B cell (primary cell): ENCODE measurements at regions of chr2 and their contacts with region 1.

Region 1: GRCh38 chr2:36785179-36785795 is 88.8 kb downstream of the VIT start:
- DNase-seq: peak; percentile 73
- ATAC-seq: peak; percentile 75
- H3K4me3 ChIP-seq: no peak overlapping the region
- H3K4me3 Mint-ChIP-seq: no peak overlapping the region
- H3K27ac ChIP-seq: no peak overlapping the region
- H3K27ac Mint-ChIP-seq: no peak overlapping the region
- H3K4me1 ChIP-seq: peaks cover 9% of the 10 kb centered on the region in 2 donors
- H3K4me1 Mint-ChIP-seq: peaks cover 13% of the 10 kb centered on the region
- H3K27me3 ChIP-seq: peaks cover 0 to 2% (median 0%) of the 10 kb centered on the region in 4 experiments
- H3K27me3 Mint-ChIP-seq: peaks cover 18% of the 10 kb centered on the region
- CTCF ChIP-seq: peak; percentile 99

Region 2: DNA sequence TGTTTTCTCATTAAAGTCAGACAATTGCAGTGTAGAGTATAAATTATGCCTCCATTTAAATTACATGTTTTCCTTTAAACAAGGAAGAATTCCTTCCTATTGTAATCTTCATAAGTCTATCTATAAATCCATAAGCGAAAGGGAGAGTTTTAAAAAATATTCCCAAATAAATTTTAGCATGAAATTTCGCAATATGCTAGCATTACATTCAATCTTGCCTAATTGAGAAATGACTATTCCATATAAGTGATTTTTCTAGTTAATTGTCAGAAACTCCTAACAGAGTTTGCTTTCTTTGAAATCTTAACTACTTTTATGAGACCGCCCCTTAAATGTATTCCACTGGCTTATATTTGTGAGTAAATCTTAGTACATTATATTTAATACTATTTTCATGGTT is 562.8 kb before region 1 on chr2:
- CTCF ChIA-PET with region 1: no interaction called
- POLR2A ChIA-PET with region 1: no interaction called
- intact Hi-C with region 1: no loop called
- DNase-seq: no peak
- ATAC-seq: no peak
- H3K4me3 ChIP-seq: no peak overlapping the region
- H3K4me3 Mint-ChIP-seq: no peak overlapping the region
- H3K27ac ChIP-seq: no peak overlapping the region
- H3K27ac Mint-ChIP-seq: no peak overlapping the region
- H3K4me1 ChIP-seq: no peaks in the 10 kb centered on the region
- H3K4me1 Mint-ChIP-seq: no peaks in the 10 kb centered on the region
- H3K27me3 ChIP-seq: no peaks in the 10 kb centered on the region
- H3K27me3 Mint-ChIP-seq: no peaks in the 10 kb centered on the region
- CTCF ChIP-seq: no peak

Region 3: DNA sequence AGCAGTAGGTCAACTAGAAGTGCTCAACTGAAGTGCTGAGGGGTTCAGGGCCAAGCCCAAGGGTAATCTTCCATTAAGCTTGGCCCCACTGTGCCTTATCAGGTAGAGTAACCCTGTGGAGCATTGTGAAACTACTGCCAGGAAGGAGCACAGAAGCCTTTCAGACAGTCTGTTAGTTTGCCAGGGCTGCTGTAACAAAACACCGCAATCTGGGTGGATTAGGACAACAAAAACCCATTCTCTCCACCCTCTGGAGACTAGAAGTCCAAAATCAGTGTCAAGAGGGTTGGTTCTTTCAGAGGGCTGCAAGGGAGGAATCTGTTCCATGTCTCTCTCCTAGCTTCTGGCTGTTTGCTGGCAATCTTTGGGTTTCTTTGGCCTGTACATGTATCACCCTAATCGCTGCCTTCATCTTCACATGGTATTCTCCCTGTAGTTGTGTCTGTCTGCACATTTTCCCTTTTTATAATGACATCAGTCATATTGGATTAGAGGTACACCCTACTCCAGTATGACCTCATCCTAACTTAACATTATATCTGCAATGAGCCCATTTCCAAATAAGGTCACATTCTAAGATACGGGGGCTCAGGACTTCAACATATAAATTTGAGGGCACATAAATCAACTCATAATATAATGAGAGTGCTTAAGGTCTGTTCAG is 67.6 kb before region 1 on chr2:
- CTCF ChIA-PET with region 1: no interaction called
- POLR2A ChIA-PET with region 1: no interaction called
- intact Hi-C with region 1: no loop called
- DNase-seq: no peak
- ATAC-seq: no peak
- H3K4me3 ChIP-seq: no peak overlapping the region
- H3K4me3 Mint-ChIP-seq: no peak overlapping the region
- H3K27ac ChIP-seq: no peak overlapping the region
- H3K27ac Mint-ChIP-seq: no peak overlapping the region
- H3K4me1 ChIP-seq: no peaks in the 10 kb centered on the region
- H3K4me1 Mint-ChIP-seq: no peaks in the 10 kb centered on the region
- H3K27me3 ChIP-seq: peaks cover 0 to 3% (median 0%) of the 10 kb centered on the region in 4 experiments
- H3K27me3 Mint-ChIP-seq: no peaks in the 10 kb centered on the region
- CTCF ChIP-seq: no peak

Region 4: DNA sequence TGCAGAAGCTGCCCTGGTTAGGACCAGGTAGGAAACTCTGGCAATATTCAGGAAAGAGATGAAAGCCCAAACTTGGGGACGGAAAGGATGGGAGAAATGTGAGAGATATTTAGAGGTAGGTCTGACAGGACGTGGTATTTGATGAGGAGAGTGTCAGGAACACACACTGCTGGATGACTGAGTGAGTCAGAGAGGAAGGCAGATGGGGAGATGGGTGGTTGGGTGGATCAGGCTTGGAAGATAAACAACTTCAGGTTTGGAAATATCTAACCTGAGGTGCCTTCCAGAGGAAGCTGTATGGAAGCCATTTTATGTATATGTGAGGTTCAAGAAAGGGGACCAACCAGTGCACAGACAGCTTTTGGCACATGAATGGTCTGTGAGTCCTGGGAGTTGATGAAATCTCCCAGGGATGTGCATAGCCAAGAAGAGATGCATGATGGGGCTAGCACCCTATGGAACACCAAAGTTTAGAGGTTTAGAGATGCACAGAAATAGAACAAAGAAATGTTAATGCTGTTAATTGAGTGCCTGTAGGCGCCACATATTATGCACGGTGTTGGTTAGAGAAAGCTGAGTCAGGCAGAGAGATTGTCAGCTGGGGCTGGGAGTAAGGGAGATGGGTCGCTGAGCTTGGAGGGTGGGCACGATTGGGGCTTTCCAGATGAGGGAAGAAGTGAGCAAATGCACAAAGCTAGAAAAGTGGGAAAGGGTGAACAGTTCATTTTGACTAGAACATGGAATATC is 12.2 kb after region 1 on chr2:
- CTCF ChIA-PET with region 1: interaction called, 29 read pairs
- POLR2A ChIA-PET with region 1: no interaction called
- intact Hi-C with region 1: no loop called
- DNase-seq: no peak
- ATAC-seq: no peak
- H3K4me3 ChIP-seq: no peak overlapping the region
- H3K4me3 Mint-ChIP-seq: no peak overlapping the region
- H3K27ac ChIP-seq: no peak overlapping the region
- H3K27ac Mint-ChIP-seq: no peak overlapping the region
- H3K4me1 ChIP-seq: no peaks in the 10 kb centered on the region
- H3K4me1 Mint-ChIP-seq: no peaks in the 10 kb centered on the region
- H3K27me3 ChIP-seq: peaks cover 0 to 5% (median 1%) of the 10 kb centered on the region in 4 experiments
- H3K27me3 Mint-ChIP-seq: peaks cover 32% of the 10 kb centered on the region
- CTCF ChIP-seq: no peak

Region 5: DNA sequence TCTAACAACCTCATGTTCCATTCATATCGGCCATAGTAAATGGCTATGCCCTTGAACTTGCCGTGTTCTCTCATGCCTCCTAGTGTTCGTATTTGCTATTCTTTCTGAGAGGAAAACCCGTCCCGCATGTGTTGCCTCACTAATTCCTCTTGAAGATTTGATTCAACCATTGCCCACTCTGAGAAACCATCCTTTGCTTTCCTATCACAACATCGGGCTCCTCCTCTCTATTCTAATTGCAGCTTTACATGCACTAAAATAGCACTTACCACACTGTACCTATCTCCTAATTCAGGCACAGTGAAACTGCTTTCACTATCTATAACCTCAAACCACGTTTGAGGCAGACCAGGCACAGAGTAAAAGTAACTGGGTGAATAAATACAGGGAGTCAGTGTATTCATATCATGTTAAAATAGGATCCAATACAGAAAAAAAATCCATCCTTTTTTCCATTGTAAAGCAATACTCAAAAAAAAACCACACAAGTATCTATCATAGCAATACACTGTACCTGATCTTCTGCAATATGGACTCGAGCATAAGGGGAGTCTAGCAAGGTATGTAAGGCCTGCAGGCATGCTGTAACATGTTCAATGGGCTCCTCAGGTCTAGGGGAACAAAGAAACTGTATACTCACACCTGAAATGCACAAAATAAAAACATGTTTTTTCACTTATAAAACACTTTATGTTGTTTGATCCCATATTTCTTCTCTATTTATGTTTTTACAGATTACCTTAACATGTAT is 220.0 kb after region 1 on chr2:
- CTCF ChIA-PET with region 1: interaction called, 4 read pairs
- POLR2A ChIA-PET with region 1: no interaction called
- intact Hi-C with region 1: loop called (anchors 2 kb)
- DNase-seq: peak; percentile 46
- ATAC-seq: peak; percentile 65
- H3K4me3 ChIP-seq: peak overlapping the region in 2 of 5 experiments; percentile 6 to 18
- H3K4me3 Mint-ChIP-seq: peak overlapping the region; percentile 74
- H3K27ac ChIP-seq: peak overlapping the region in 1 of 2 donors; percentile 57
- H3K27ac Mint-ChIP-seq: peak overlapping the region; percentile 86
- H3K4me1 ChIP-seq: peaks cover 13 to 17% of the 10 kb centered on the region in 2 donors
- H3K4me1 Mint-ChIP-seq: peaks cover 14% of the 10 kb centered on the region
- H3K27me3 ChIP-seq: no peaks in the 10 kb centered on the region
- H3K27me3 Mint-ChIP-seq: no peaks in the 10 kb centered on the region
- CTCF ChIP-seq: peak; percentile 49

Region 6: DNA sequence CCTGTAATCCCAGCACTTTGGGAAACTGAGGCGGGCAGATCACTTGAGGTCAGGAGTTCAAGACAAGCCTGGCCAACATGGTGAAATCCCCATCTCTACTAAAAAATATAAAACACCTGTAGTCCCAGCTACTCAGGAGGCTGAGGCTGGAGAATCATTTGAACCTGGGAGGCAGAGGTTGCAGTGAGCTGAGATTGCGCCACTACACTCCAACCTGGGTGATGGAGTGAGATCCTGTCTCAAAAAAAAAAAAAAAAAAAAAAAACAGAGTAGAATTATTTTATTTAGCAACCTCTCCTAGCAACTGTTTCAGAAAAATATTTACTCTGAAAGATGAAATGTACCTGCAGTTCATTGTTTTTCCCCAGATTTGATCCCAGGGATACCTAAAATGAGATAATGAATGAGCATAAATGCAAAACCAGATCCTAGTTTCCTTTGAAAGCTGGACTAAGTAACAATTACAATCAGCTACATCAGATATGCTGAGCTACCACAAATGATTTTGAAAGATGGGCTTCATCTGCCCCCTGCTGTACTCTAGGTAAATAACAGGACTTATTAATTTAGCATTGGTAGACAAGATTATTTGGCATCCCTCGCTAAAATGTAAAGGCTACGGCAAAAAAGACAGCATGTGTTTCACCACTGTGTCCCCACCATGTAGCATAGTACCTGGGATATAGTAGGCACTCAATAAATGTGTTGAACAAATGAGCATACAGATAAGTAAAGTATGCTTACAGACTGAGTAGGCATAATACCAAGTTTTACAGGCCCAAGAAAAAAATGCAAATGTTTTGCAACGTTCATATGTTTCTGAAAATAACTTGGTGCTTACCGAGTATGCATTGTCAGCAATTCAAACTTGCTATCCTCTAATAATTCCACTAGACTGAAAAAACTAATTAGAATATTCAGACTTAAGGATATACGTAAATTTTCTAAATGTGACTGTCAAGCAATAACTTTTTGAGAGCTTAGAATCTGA is 1489.3 kb after region 1 on chr2:
- CTCF ChIA-PET with region 1: no interaction called
- POLR2A ChIA-PET with region 1: no interaction called
- intact Hi-C with region 1: loop called (anchors 5 kb)
- DNase-seq: peak; percentile 60
- ATAC-seq: peak; percentile 39
- H3K4me3 ChIP-seq: no peak overlapping the region
- H3K4me3 Mint-ChIP-seq: no peak overlapping the region
- H3K27ac ChIP-seq: no peak overlapping the region
- H3K27ac Mint-ChIP-seq: no peak overlapping the region
- H3K4me1 ChIP-seq: no peaks in the 10 kb centered on the region
- H3K4me1 Mint-ChIP-seq: peaks cover 4% of the 10 kb centered on the region
- H3K27me3 ChIP-seq: no peaks in the 10 kb centered on the region
- H3K27me3 Mint-ChIP-seq: no peaks in the 10 kb centered on the region
- CTCF ChIP-seq: peak; percentile 74